ENCODE measurements at regions of chr1 and their contacts with region 1.

Region 1: DNA sequence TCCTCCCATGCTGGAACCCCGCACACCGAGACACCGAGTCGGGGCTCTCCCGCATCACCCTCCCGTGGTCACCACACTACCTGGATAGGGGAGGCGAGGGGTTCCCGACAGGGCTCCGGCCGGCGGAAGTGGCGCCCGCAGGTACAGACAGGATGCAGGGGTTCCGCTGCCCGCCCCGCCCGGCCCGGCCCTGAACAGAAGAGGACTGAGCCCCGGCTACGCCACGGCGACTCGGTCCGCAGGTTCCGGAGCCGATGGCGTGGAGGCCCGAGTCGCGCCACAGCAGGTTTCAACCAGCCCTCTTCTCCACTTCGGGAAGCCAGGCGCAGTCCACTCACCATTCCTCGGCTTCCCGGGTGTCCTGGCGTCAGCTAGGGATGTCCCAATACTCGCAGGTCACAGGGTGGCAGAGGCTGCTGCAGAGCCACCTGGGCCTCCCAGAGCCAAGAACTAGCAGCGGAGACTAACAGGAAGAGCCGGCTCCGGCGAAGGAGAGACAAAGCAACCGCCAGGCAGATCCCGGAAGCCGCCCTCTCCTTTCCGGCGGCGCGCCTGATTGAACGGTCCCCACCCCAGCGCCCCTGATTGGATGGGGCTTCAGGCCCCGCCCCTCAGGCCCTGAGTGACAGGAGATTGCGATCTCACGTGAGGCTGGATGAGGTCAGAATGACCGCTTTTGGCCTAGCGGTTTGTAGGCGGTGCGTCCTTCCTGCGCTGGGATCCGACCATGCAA is at the start of gene ZNF669:
- DNase-seq: peak; percentile 97
- H3K4me3 Mint-ChIP-seq: peak within 1 kb of the TSS; percentile 93
- H3K27ac Mint-ChIP-seq: peak within 1 kb of the TSS; percentile 89
- H3K4me1 Mint-ChIP-seq: peaks cover 8% of the 10 kb centered on the region
- H3K27me3 Mint-ChIP-seq: peaks cover 17% of the 10 kb centered on the region
- total RNA-seq, gene ZNF669: 6.2 and 6.7 TPM in 2 replicates

Region 2: DNA sequence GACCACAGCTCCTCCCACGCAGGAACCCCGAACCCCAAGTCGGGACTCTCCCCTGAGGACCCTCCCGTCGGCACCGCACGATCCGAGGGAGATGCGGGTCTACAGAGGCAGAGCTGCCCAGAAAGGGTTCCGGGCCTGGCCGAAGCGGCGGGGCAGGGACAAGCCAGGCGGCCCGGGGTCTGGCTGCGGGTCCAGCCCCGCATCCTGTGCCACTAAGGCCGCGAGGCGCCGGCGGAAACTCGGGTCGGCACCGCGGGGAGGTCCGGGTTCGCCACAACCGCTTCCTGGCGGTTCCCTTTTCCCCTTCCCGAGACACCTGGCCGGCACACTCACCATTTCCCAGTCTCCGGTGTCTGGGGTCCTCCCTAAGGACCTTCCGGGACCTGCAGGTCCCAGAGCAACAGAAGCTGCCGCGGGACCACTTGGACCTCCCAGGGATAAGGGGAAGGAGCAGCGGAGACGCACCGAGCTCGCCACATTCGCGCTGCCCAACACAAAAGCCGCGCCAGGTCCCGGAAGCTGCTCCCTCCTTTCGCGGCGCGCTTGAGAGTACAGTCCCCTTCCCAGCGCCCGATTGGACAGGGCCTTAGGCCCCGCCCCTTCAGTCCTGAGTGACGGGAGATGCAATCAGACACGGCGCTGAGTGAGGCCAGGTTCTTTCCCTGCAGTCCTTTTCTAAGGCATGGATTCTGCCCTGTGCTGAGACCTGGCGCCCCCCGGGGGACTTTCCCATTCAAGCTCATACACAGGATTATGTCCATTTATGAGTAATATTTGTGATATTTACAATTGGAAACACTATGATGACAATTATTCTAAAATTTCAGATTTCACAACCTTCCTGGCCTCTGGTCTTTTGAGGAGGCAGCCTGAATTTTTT is 25.5 kb before region 1 on chr1 and contains the start of gene ZNF670:
- intact Hi-C with region 1: loop called (anchors 1 kb)
- DNase-seq: peak; percentile 96
- H3K4me3 Mint-ChIP-seq: peak within 1 kb of the TSS; percentile 94
- H3K27ac Mint-ChIP-seq: peak within 1 kb of the TSS; percentile 85
- H3K4me1 Mint-ChIP-seq: peaks cover 12% of the 10 kb centered on the region
- H3K27me3 Mint-ChIP-seq: peaks cover 7% of the 10 kb centered on the region
- total RNA-seq, gene ZNF670: 2.8 TPM in 2 replicates

Region 3: GRCh38 chr1:247172996-247173395 is 69.0 kb after region 1 on chr1:
- intact Hi-C with region 1: loop called (anchors 10 kb)
- DNase-seq: no peak
- H3K4me3 Mint-ChIP-seq: no peak overlapping the region
- H3K27ac Mint-ChIP-seq: no peak overlapping the region
- H3K4me1 Mint-ChIP-seq: peaks cover 5% of the 10 kb centered on the region
- H3K27me3 Mint-ChIP-seq: no peaks in the 10 kb centered on the region

Region 4: DNA sequence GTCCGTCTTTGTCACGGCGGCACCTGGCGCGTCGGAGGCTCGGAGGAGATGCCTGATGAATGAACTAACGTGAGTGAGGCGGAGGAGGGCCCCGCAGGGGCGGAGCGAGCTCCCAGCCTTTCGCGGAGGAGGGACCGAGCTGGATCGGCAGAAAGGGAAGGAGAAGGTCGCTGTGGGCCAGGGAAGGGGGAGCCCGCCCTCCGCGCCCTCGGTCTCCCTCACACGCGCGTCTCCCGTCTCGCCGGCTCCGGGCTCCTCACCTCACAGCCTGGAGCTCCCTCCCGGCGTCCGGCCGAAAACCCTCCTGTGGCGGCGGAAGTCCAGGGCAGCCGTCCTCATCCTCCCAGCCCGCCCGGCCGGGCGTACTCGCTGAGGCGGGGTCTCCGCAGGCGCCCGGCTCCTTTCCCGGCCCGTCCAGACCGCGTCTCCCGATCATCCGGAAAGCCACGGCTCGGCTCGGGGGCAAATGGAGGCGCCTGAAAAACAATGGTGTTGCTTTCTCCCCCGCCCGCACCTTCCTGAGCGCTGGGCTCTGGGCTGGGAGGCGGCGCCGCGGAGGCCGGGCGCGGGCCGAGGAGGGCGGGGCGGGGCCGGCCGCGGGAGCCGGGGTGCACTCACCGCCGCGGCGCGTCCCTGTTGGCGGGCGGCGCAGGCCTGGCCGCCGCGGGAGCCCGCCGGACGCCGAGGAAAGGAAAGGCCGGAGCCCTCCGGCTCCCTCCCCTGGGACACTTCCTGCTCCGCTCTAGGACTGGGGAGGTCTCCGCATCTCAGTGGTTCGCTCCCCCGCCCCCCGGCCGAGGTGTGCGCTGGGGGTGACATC is 227.4 kb after region 1 on chr1 and contains the start of gene ZNF496:
- intact Hi-C with region 1: loop called (anchors 2 kb)
- DNase-seq: peak; percentile 92
- H3K4me3 Mint-ChIP-seq: peak within 1 kb of the TSS; percentile 92
- H3K27ac Mint-ChIP-seq: peak within 1 kb of the TSS; percentile 88
- H3K4me1 Mint-ChIP-seq: peaks cover 16% of the 10 kb centered on the region
- H3K27me3 Mint-ChIP-seq: peaks cover 2% of the 10 kb centered on the region
- total RNA-seq, gene ZNF496: 14.2 and 15.7 TPM in 2 replicates